GM12878 (cell line): ENCODE measurements at regions of chr3 and their contacts with region 1.

Region 1: DNA sequence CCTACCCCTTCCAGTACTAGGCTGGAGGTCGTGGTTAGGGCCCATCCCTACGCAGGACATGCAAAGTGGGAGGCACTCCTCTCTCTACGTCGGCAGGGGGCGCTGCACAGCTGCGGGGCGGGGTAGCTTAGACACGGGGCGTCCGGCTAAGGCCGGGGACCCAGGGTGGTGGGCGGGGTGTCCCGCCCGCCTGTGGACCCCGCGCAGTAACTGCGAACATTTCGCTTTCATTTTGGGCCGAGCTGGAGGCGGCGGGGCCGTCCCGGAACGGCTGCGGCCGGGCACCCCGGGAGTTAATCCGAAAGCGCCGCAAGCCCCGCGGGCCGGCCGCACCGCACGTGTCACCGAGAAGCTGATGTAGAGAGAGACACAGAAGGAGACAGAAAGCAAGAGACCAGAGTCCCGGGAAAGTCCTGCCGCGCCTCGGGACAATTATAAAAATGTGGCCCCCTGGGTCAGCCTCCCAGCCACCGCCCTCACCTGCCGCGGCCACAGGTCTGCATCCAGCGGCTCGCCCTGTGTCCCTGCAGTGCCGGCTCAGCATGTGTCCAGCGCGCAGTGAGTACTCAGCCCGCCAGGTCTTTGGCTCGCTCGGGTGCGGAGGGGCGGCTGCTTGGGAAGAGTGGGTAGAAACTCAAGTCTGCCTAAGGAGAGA is at the start of gene IL12A:
- DNase-seq: peak; percentile 72
- ATAC-seq: peak; percentile 92
- H3K4me3 ChIP-seq: peak within 1 kb of the TSS; percentile 74
- H3K27ac ChIP-seq: peak within 1 kb of the TSS; percentile 75
- H3K4me1 ChIP-seq: peaks cover 17% of the 10 kb centered on the region
- H3K27me3 ChIP-seq: no peaks in the 10 kb centered on the region
- CTCF ChIP-seq: peak; percentile 90 to 96 (median 96)
- EP300 ChIP-seq: no peak
- POLR2A ChIP-seq: peak; percentile 70
- RAD21 ChIP-seq: peak; percentile 76
- polyA plus RNA-seq, gene IL12A: 0.50 to 2.6 TPM

Region 2: DNA sequence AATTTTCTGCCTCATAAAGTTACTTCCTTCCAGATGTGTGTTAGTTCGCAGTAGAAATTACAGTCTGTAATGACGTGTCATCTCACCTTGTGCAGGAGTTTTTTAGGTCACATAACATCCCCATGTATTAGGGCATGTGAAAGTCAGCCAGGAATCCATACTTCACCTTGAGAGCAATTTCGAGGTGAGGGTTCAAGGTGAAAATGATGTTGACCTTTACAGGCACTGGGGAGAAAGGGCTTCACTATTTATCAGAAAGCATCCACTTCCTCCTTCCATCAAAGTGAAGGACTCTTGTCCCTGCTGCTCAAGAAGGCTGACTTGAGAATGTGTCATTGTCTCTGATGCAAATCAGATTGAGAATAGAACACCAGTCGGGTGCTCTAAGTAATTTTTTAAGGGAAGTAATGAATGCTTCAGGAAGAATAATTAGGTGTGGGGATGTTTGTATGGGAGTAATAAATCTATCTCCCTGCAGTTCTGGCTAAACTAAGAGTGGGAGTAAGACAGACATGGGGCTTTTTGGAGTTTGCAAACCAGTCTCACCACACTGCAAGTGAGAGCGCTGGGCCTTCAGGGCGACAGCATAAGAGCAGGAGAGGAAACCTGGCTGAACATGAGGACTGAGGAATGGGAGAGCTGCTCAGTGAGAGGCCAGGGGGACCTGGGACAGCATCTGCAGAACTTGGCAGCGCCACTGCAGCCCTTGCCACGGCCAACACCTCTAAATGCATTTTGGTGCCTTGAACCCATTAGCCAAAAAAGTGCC is 86.0 kb before region 1 on chr3:
- CTCF ChIA-PET with region 1: interaction called, 33 read pairs
- POLR2A ChIA-PET with region 1: no interaction called
- RAD21 ChIA-PET with region 1: interaction called, 4 read pairs
- SMC1A ChIA-PET with region 1: interaction called, 9 read pairs
- in situ Hi-C with region 1: no loop called
- intact Hi-C with region 1: loop called (anchors 5 kb)
- DNase-seq: no peak
- ATAC-seq: peak; percentile 78
- H3K4me3 ChIP-seq: no peak overlapping the region
- H3K27ac ChIP-seq: peak overlapping the region; percentile 52
- H3K4me1 ChIP-seq: peaks cover 28% of the 10 kb centered on the region
- H3K27me3 ChIP-seq: no peaks in the 10 kb centered on the region
- CTCF ChIP-seq: no peak
- EP300 ChIP-seq: no peak
- POLR2A ChIP-seq: no peak
- RAD21 ChIP-seq: no peak

Region 3: GRCh38 chr3:159929435-159930141 is 59.2 kb before region 1 on chr3:
- CTCF ChIA-PET with region 1: interaction called, 35 read pairs
- POLR2A ChIA-PET with region 1: no interaction called
- RAD21 ChIA-PET with region 1: interaction called, 16 read pairs
- SMC1A ChIA-PET with region 1: interaction called, 18 read pairs
- in situ Hi-C with region 1: no loop called
- intact Hi-C with region 1: no loop called
- DNase-seq: no peak
- ATAC-seq: peak; percentile 88
- H3K4me3 ChIP-seq: no peak overlapping the region
- H3K27ac ChIP-seq: peak overlapping the region; percentile 65
- H3K4me1 ChIP-seq: peaks cover 14% of the 10 kb centered on the region
- H3K27me3 ChIP-seq: no peaks in the 10 kb centered on the region
- CTCF ChIP-seq: peak; percentile 37 to 40 (median 39); a peak in 4 of 6 replicates
- EP300 ChIP-seq: no peak
- POLR2A ChIP-seq: no peak
- RAD21 ChIP-seq: peak; percentile 63

Region 4: GRCh38 chr3:159964166-159964973 is 24.4 kb before region 1 on chr3:
- CTCF ChIA-PET with region 1: interaction called, 15 read pairs
- POLR2A ChIA-PET with region 1: interaction called, 5 read pairs
- RAD21 ChIA-PET with region 1: interaction called, 3 read pairs
- SMC1A ChIA-PET with region 1: interaction called, 5 read pairs
- in situ Hi-C with region 1: no loop called
- intact Hi-C with region 1: no loop called
- DNase-seq: peak; percentile 74
- ATAC-seq: peak; percentile 97
- H3K4me3 ChIP-seq: peak overlapping the region; percentile 60; the same call in 1 of the 2 replicates
- H3K27ac ChIP-seq: peak overlapping the region; percentile 71
- H3K4me1 ChIP-seq: peaks cover 11% of the 10 kb centered on the region; the same call in 1 of the 2 replicates
- H3K27me3 ChIP-seq: no peaks in the 10 kb centered on the region
- CTCF ChIP-seq: no peak
- EP300 ChIP-seq: peak in 1 of 2 experiments; percentile 92; a peak in 2 of 4 replicates
- POLR2A ChIP-seq: no peak
- RAD21 ChIP-seq: no peak

Region 5: DNA sequence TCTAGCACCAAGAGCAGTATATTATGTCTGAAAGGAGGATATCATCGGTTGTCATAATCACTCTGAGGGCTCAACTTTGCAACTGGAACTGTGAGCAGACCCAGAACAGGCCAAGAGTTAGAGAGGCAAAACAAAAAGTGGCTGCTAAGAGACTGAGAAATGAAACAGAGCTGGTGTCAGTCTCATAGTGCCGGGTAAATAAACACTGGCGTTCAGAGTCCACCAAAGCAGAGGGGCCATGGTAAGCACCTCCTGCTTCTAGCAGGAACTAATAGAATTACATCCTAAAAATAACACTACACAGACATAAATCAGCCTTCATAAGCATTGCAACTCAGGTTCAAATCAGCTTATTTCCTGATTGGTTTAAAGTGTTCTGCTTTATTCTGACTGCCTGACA is 10.4 kb before region 1 on chr3:
- CTCF ChIA-PET with region 1: interaction called, 75 read pairs
- POLR2A ChIA-PET with region 1: no interaction called
- RAD21 ChIA-PET with region 1: interaction called, 3 read pairs
- SMC1A ChIA-PET with region 1: interaction called, 44 read pairs
- in situ Hi-C with region 1: no loop called
- intact Hi-C with region 1: no loop called
- DNase-seq: no peak
- ATAC-seq: peak; percentile 92
- H3K4me3 ChIP-seq: no peak overlapping the region
- H3K27ac ChIP-seq: no peak overlapping the region
- H3K4me1 ChIP-seq: no peaks in the 10 kb centered on the region
- H3K27me3 ChIP-seq: no peaks in the 10 kb centered on the region
- CTCF ChIP-seq: no peak
- EP300 ChIP-seq: no peak
- POLR2A ChIP-seq: no peak
- RAD21 ChIP-seq: no peak